Colonic mucosa (tissue), 4 donors: ENCODE measurements at regions of chr6 and their contacts with region 1.

Region 1: GRCh38 chr6:99993533-99994251 is at the start of gene MCHR2:
- DNase-seq: no peak
- H3K4me3 ChIP-seq: no peak within 1 kb of the TSS
- H3K27ac ChIP-seq: no peak within 1 kb of the TSS
- H3K4me1 ChIP-seq: no peaks in the 10 kb centered on the region
- H3K27me3 ChIP-seq: no peaks in the 10 kb centered on the region
- CTCF ChIP-seq: no peak
- total RNA-seq, gene MCHR2: not detected

Region 2: GRCh38 chr6:99905209-99906106 is 88.2 kb before region 1 on chr6:
- intact Hi-C with region 1: no loop called
- DNase-seq: no peak
- H3K4me3 ChIP-seq: no peak overlapping the region
- H3K27ac ChIP-seq: no peak overlapping the region
- H3K4me1 ChIP-seq: no peaks in the 10 kb centered on the region
- H3K27me3 ChIP-seq: no peaks in the 10 kb centered on the region
- CTCF ChIP-seq: peak; percentile 22

Region 3: GRCh38 chr6:100493227-100493911 is 499.7 kb after region 1 on chr6:
- intact Hi-C with region 1: loop called (anchors 10 kb)
- DNase-seq: no peak
- H3K4me3 ChIP-seq: no peak overlapping the region
- H3K27ac ChIP-seq: no peak overlapping the region
- H3K4me1 ChIP-seq: no peaks in the 10 kb centered on the region
- H3K27me3 ChIP-seq: peaks cover 8% of the 10 kb centered on the region
- CTCF ChIP-seq: no peak